Dorsolateral prefrontal cortex (tissue), 120 donors: ENCODE measurements at regions of chr1 and their contacts with region 1.

Region 1: GRCh38 chr1:6624710-6625583 is at the start of gene THAP3:
- DNase-seq: peak; percentile 65 to 90 (median 81)
- H3K4me3 ChIP-seq: peak within 1 kb of the TSS; percentile 64 to 97 (median 86)
- H3K27ac ChIP-seq: peak within 1 kb of the TSS; percentile 38 to 95 (median 88)
- H3K27me3 ChIP-seq: no peaks in the 10 kb centered on the region
- CTCF ChIP-seq: peak in 22 of 56 donors; percentile 7 to 50 (median 22)
- total RNA-seq, gene THAP3: 15.9 to 40.5 (median 24.6) TPM

Region 2: DNA sequence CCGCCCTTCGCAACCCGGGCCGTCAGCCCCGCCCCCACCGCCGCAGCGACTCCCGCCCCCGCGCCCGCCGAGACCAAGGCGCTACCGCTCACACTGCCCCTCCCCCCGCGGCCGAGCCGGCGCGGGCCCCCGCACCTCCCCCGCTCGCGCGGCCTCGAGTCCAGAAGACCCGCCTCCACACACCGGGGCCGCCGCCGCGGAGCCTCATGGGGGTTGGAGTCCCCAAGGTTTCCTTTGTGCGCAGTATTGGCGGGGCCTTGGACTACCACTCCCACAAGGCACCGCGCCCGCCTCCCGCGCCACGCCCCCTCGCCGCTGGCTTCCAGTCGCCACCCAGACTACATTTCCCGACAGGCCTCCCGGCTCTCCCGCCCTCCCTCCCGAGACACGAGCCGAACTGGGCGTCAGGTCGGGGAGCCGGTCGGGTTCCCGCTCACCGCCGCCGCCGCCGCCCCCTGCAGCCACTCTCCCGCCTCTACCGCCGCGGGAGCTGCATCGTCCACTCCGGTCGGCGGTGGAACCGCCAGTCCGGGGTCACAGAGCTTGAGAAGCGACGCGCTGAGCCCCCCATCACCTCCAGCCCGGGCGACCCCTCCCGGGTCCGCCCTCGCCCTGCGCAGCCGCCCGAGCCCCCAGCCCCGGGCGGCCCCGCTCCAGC is 11.5 kb before region 1 on chr1 and contains the start of gene PHF13:
- intact Hi-C with region 1: loop called in 1 of 2 experiments (anchors 1 kb)
- DNase-seq: peak; percentile 98 to 100 (median 99)
- H3K4me3 ChIP-seq: peak within 1 kb of the TSS; percentile 58 to 98 (median 89)
- H3K27ac ChIP-seq: peak within 1 kb of the TSS; percentile 60 to 99 (median 96)
- H3K27me3 ChIP-seq: no peaks in the 10 kb centered on the region
- CTCF ChIP-seq: peak in 10 of 56 donors; percentile 3 to 33 (median 20)
- total RNA-seq, gene PHF13: 9.4 to 21.9 (median 13.0) TPM